CD4-positive, alpha-beta T cell (primary cell): ENCODE measurements at regions of chr12 and their contacts with region 1.

Region 1: DNA sequence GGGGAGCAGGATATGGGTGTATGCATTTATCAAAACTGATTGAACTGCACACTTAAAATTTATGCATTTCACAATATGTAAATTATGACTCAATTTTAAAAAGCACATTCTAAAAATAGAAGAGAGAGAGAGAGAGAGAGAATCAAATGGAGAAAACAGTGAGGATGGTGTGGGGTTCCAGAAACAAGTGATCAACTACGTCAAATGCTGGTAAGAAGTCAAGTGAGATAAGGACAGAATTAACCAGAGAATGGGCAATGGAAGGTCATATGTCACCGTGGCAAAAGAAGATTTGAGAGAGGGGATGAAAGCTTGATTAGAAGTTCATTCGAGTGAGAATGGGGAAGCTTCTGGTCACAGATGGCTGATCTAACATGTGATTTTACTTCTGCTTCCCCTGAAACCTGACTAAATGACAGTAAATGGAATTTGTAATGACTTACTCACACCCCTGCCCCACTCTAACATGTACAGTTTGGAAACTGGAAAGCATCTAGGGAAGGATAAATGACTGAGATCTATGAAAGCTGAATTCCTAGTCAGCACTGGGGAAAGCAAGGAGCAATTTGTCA is 276.5 kb upstream of the AMIGO2 start:
- DNase-seq: peak in 3 of 14 experiments; percentile 39 to 61 (median 45)
- ATAC-seq: no peak
- H3K4me3 ChIP-seq: no peak overlapping the region
- H3K4me3 Mint-ChIP-seq: peak overlapping the region; percentile 36
- H3K27ac ChIP-seq: no peak overlapping the region
- H3K27ac Mint-ChIP-seq: peak overlapping the region; percentile 66
- H3K4me1 ChIP-seq: peaks cover 23% of the 10 kb centered on the region
- H3K4me1 Mint-ChIP-seq: peaks cover 83% of the 10 kb centered on the region
- H3K27me3 ChIP-seq: no peaks in the 10 kb centered on the region
- H3K27me3 Mint-ChIP-seq: no peaks in the 10 kb centered on the region
- CTCF ChIP-seq: no peak

Region 2: GRCh38 chr12:47391566-47391965 is 35.4 kb after region 1 on chr12:
- CTCF ChIA-PET with region 1: interaction called, 3 read pairs
- POLR2A ChIA-PET with region 1: interaction called, 6 read pairs
- intact Hi-C with region 1: loop called in 1 of 2 experiments (anchors 5 kb)
- DNase-seq: peak; percentile 28 to 88 (median 51)
- ATAC-seq: peak; percentile 90
- H3K4me3 ChIP-seq: no peak overlapping the region
- H3K4me3 Mint-ChIP-seq: peak overlapping the region; percentile 62
- H3K27ac ChIP-seq: peak overlapping the region; percentile 43 to 47
- H3K27ac Mint-ChIP-seq: peak overlapping the region; percentile 85
- H3K4me1 ChIP-seq: peaks cover 49% of the 10 kb centered on the region
- H3K4me1 Mint-ChIP-seq: peaks cover 78% of the 10 kb centered on the region
- H3K27me3 ChIP-seq: no peaks in the 10 kb centered on the region
- H3K27me3 Mint-ChIP-seq: no peaks in the 10 kb centered on the region
- CTCF ChIP-seq: no peak

Region 3: DNA sequence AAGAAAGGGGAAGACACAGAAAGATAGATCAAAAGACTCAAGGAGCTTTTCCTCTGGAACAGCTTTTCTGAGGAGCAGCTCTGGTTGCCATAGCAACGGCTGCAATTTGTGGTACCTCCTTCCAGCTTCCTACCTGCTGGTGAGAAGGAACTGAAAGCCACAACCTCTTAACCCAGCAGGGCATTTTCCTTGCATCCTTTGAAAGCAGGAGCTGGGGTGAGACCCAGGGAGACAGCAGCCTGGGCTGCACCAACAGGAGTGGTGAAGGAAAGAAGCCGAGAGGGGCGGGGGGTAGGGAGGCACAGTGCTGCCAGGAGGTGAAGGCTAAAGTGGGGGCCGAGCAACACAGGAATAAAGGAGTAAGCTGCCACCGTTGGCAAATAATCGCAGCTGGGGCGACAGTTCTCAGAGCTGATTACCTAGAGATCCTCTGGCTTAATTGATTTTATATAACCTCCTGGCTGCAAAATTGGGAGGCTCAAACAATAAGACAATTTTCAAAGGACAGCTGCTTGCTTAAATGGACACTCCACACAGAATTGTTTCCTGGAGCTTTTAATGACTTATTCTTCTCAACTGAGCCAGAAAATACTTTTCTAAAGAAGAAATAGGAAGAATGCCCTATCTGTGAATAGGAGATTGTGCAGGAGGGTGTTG is 220.2 kb after region 1 on chr12:
- CTCF ChIA-PET with region 1: no interaction called
- POLR2A ChIA-PET with region 1: no interaction called
- intact Hi-C with region 1: no loop called
- DNase-seq: no peak
- ATAC-seq: no peak
- H3K4me3 ChIP-seq: no peak overlapping the region
- H3K4me3 Mint-ChIP-seq: no peak overlapping the region
- H3K27ac ChIP-seq: no peak overlapping the region
- H3K27ac Mint-ChIP-seq: no peak overlapping the region
- H3K4me1 ChIP-seq: no peaks in the 10 kb centered on the region
- H3K4me1 Mint-ChIP-seq: no peaks in the 10 kb centered on the region
- H3K27me3 ChIP-seq: no peaks in the 10 kb centered on the region
- H3K27me3 Mint-ChIP-seq: no peaks in the 10 kb centered on the region
- CTCF ChIP-seq: no peak